ENCODE measurements at regions of chr1 and their contacts with region 1.

Region 1: DNA sequence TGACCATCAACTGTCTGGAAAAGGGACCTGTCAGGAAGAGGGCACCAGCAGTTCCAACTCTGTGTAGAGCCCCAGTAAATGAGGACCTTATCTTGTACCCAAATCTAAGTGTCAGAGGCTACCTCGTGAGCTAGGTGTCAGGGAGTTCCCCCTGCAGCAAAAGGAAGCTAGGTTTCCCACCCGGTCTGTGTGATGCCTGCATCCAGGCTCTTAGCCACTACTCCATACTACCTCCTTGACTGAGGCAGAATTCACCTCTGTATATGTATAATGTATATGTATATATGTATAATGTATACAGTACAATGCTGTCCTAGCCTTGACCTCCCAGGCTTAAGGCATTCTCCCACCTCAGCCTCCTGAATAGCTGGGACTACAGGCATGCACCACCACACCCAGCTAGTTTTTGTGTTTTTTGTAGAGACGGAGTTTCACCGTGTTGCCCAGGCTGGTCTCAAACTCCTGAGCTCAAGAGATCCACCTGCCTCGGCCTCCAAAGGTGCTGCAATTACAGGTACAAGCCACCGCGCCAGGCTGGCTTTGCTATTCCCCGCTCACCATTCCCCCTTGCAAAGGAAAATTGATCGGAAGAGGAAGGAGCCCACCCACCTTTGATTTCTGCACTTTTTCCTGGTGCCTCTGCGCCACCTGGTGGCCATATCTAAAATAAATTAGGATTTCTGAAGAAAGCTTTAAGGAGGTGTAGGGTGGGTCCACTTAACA is 15.7 kb upstream of the LUZP1 start:
- DNase-seq: no peak
- ATAC-seq: peak; percentile 76
- H3K4me3 ChIP-seq: no peak overlapping the region
- H3K27ac ChIP-seq: no peak overlapping the region
- H3K4me1 ChIP-seq: no peaks in the 10 kb centered on the region; the same call in 1 of the 2 replicates
- H3K27me3 ChIP-seq: no peaks in the 10 kb centered on the region
- CTCF ChIP-seq: peak; percentile 51 to 76 (median 52); a peak in 5 of 6 replicates
- EP300 ChIP-seq: no peak
- POLR2A ChIP-seq: no peak
- RAD21 ChIP-seq: peak; percentile 97

Region 2: DNA sequence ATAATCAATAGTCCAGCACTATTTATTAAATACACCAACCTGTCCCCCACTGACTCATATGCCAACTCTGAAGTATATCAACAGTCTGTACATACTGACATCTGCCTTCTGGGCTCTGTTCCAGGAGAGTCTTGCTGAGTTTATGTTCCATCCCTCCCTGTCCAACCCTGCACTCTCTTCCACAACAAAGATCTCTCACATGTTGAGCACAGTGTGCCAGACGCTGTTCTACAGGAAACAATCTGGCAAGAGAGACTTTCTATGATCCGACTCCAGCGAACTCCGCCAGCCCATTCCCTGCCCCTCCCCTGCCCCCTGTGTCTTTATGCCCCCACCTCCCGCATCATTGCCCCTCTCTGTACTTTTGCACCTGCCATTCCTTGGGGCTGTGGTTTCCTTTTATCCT is 215.1 kb before region 1 on chr1:
- CTCF ChIA-PET with region 1: interaction called, 114 read pairs
- POLR2A ChIA-PET with region 1: no interaction called
- RAD21 ChIA-PET with region 1: interaction called, 9 read pairs
- SMC1A ChIA-PET with region 1: interaction called, 13 read pairs
- in situ Hi-C with region 1: no loop called
- intact Hi-C with region 1: no loop called
- DNase-seq: no peak
- ATAC-seq: no peak
- H3K4me3 ChIP-seq: no peak overlapping the region
- H3K27ac ChIP-seq: no peak overlapping the region
- H3K4me1 ChIP-seq: no peaks in the 10 kb centered on the region
- H3K27me3 ChIP-seq: peaks cover 0 to 5% of the 10 kb centered on the region in 2 experiments; a peak in 3 of 4 replicates
- CTCF ChIP-seq: no peak
- EP300 ChIP-seq: no peak
- POLR2A ChIP-seq: no peak
- RAD21 ChIP-seq: no peak

Region 3: GRCh38 chr1:23081376-23081775 is 103.0 kb before region 1 on chr1:
- CTCF ChIA-PET with region 1: interaction called, 961 read pairs
- POLR2A ChIA-PET with region 1: interaction called, 3 read pairs
- RAD21 ChIA-PET with region 1: interaction called, 5 read pairs
- SMC1A ChIA-PET with region 1: interaction called, 27 read pairs
- in situ Hi-C with region 1: no loop called
- intact Hi-C with region 1: no loop called
- DNase-seq: no peak
- ATAC-seq: peak; percentile 42; the same call in 1 of the 3 replicates
- H3K4me3 ChIP-seq: no peak overlapping the region
- H3K27ac ChIP-seq: no peak overlapping the region
- H3K4me1 ChIP-seq: no peaks in the 10 kb centered on the region
- H3K27me3 ChIP-seq: no peaks in the 10 kb centered on the region
- CTCF ChIP-seq: peak in 2 of 3 experiments; percentile 2 to 15; a peak in 1 of 6 replicates
- EP300 ChIP-seq: no peak
- POLR2A ChIP-seq: no peak
- RAD21 ChIP-seq: 0 out of 2 replicates have a peak, but pooled peaks have one; percentile 11

Region 4: DNA sequence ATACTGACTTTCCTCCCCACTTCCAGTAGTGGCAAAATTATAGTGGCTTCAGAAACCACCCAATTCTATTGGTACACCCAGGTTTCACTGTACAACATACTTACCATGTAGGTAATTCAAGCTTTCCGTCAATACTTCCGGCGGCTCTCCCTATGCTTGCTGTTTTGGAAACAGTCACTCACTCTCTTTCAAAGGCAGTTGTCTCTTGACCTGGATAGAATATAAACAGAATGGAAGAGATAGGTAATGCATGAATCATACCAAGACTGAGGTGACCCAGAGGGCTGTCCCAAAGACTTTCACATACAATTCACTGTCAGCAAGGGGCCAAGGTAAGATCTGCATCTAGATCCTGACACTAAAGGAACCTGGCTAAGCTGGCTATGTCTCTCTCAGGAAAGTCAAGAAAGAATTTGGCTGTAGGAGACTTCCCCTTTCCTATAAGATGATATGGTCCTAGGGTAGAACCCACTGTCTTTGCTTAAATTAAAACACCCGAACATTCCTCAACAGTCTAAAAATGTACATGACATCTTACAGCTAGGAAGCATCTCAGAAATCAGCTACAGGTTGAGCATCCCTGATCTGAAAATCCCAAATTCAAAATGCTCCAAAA is 75.3 kb before region 1 on chr1:
- CTCF ChIA-PET with region 1: interaction called, 961 read pairs
- POLR2A ChIA-PET with region 1: interaction called, 4 read pairs
- RAD21 ChIA-PET with region 1: interaction called, 338 read pairs
- SMC1A ChIA-PET with region 1: interaction called, 455 read pairs
- in situ Hi-C with region 1: no loop called
- intact Hi-C with region 1: no loop called
- DNase-seq: no peak
- ATAC-seq: no peak
- H3K4me3 ChIP-seq: no peak overlapping the region
- H3K27ac ChIP-seq: no peak overlapping the region
- H3K4me1 ChIP-seq: peaks cover 20% of the 10 kb centered on the region
- H3K27me3 ChIP-seq: no peaks in the 10 kb centered on the region
- CTCF ChIP-seq: no peak
- EP300 ChIP-seq: no peak
- POLR2A ChIP-seq: no peak
- RAD21 ChIP-seq: no peak

Region 5: DNA sequence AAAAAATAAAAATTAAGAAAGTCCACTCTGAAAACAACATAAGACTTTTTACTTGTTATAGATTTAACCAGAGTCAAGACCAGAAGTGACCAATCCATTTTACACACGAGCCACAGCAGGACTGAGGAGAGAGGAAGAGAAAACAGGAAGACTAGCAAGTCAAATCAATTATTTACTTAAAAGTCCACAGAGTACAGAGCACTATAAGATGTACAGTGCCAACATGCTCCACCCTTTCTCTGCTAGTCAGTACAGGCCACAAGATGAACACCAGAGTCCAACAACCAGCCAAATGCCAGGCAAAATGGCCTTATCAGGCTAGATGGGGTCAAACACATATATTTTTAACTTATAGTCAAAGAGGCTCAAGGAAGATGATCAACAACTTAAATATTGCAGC is 35.3 kb before region 1 on chr1:
- CTCF ChIA-PET with region 1: interaction called, 17 read pairs
- POLR2A ChIA-PET with region 1: no interaction called
- RAD21 ChIA-PET with region 1: interaction called, 6 read pairs
- SMC1A ChIA-PET with region 1: interaction called, 14 read pairs
- in situ Hi-C with region 1: no loop called
- intact Hi-C with region 1: no loop called
- DNase-seq: peak; percentile 34
- ATAC-seq: peak; percentile 94
- H3K4me3 ChIP-seq: no peak overlapping the region
- H3K27ac ChIP-seq: no peak overlapping the region
- H3K4me1 ChIP-seq: no peaks in the 10 kb centered on the region
- H3K27me3 ChIP-seq: no peaks in the 10 kb centered on the region
- CTCF ChIP-seq: no peak
- EP300 ChIP-seq: no peak
- POLR2A ChIP-seq: no peak
- RAD21 ChIP-seq: no peak

Region 6: DNA sequence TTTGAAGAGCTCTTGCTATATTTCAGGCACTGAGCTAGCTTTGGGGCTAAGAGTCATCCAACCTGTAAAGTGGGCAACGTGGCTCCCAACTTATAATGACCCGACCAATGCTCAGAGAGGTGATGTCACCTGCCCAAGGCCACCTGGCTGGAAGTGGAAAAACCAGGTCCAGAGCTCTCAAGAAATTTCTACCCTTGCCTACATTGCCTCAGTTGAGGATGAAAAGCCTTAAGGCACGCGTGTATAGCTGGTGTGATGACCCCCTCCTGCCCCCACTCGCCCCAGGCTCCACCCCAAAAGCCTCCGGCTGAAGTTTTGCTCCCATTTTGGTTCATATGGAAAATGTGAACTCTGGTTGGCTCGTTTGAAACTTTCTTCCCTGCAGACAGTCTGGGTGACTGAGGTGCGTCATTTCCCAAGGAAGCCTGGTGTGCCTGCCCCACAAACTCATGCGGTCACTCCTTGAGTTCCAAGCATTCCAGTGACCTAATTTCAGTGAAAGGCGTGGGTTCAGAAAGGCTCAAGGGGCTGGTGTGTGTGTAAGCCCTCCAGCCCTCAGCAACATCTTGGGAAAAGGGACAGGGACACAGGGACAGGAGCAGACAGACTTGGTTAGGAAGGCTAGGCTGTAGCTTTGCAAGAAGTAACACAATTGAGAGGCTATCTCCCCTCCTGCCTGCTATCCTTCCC is 12.4 kb after region 1 on chr1:
- CTCF ChIA-PET with region 1: interaction called, 33 read pairs
- POLR2A ChIA-PET with region 1: no interaction called
- RAD21 ChIA-PET with region 1: interaction called, 3 read pairs
- SMC1A ChIA-PET with region 1: interaction called, 7 read pairs
- in situ Hi-C with region 1: no loop called
- intact Hi-C with region 1: no loop called
- DNase-seq: no peak
- ATAC-seq: no peak
- H3K4me3 ChIP-seq: no peak overlapping the region
- H3K27ac ChIP-seq: no peak overlapping the region
- H3K4me1 ChIP-seq: peaks cover 3% of the 10 kb centered on the region; the same call in 1 of the 2 replicates
- H3K27me3 ChIP-seq: no peaks in the 10 kb centered on the region
- CTCF ChIP-seq: no peak
- EP300 ChIP-seq: no peak
- POLR2A ChIP-seq: no peak
- RAD21 ChIP-seq: no peak

Measured in GM12878 (cell line).